Motor neuron (in vitro differentiated cells): ENCODE measurements at regions of chr20 and their contacts with region 1.

Region 1: DNA sequence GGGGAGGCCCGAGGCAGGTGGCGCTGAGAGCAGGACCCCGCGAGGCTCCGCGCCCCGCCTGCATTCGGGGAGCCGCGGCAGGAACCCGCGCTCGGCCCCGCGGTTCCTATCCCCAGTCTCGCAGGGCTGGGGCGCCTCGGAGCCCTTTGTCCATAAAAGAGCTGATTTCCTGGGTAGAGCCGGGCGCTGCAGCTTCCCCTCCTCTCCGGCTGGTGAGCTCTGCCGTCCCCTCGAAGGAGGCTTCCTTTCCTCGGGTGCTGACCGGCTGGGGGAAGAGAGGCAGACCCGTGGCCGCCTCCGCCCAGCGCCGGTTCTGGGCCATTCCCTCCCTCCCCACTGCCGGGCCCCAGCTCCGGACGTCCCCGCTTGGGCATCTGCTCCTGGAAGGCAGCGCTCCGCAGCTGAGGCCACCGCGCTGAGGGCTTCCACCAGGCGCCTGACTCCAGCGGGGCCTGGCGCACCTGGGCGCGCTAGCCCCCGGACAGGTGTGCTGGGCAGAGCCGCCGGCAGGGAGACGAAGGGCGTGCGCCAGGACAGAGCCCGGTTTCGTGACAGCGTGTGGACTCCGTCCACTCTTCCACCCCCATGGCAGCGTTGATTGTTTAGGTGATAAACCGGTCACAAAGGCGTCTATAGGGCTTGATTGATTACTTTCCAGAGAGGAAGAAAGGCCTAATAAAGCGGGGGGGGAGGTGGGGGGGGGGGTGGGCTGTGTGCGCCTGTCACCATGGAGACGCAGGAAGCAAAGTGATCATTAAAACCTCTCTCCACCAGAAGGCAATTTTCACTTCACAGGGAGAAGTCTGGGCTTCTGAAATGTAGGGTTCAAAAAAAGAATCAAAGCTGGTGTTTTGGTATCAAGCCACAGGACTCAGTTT is 1.1 kb downstream of the PHACTR3 start:
- ATAC-seq: peak in 5 of 8 experiments; percentile 64 to 69 (median 67)
- H3K4me3 ChIP-seq: peak overlapping the region; percentile 54 to 75 (median 64)
- H3K27ac ChIP-seq: peak overlapping the region; percentile 93 to 96
- H3K4me1 ChIP-seq: peaks cover 32 to 37% of the 10 kb centered on the region in 2 donors

Region 2: DNA sequence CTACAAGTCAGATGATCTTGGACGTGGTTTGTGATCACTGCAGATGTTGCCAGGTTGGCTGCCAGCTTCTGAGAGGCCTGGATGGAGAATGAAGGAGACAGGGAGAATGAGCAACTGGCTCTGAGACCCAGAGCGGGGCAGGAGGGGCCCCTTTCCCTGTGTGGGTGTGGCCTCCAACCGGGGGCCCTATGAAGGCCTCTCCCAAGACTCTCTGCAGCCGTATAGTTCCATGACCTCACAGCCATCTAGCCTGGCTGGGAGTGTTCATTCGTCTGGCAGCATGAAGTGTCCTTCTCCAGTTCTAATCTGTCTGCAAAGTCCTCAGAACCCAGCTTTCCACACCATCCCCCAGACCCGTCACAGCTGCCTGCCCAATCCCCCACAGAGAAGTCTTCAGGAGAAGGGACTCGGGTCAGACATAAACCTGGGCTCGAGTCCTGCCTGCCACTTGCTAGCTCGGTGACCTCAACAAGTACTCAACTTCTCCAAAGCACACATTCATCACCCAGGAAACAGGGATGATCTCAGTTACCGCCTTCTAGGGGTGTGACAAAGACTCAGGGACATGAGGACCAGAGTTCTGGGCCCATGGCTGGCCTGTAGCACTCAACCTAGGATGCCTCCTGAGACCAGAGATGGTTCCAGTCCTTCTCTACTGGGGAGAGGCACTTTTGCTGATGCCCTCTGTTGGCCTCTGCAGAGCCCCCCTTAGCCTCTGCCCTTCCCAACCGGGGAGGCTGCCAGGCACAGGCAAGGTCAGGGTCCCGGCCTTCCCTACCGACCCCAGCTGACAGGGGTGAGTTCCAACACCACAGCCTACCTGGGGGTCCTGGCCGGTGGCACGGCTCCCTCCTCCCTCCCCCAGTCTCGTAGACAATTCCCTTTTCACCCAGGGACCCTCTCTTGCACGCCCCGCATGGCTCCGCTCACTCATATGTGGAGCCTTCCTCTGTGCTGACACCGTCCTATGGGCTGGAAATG is 182.2 kb before region 1 on chr20:
- in situ Hi-C with region 1: no loop called
- ATAC-seq: peak in 6 of 8 experiments; percentile 23 to 78 (median 29)
- H3K4me3 ChIP-seq: no peak overlapping the region
- H3K27ac ChIP-seq: no peak overlapping the region
- H3K4me1 ChIP-seq: peaks cover 7% of the 10 kb centered on the region in 2 donors

Region 3: GRCh38 chr20:59723607-59724456 is 118.4 kb after region 1 on chr20:
- in situ Hi-C with region 1: loop called in 4 of 9 experiments (anchors 25 kb)
- ATAC-seq: peak in 4 of 8 experiments; percentile 38 to 73 (median 58)
- H3K4me3 ChIP-seq: no peak overlapping the region
- H3K27ac ChIP-seq: no peak overlapping the region
- H3K4me1 ChIP-seq: peaks cover 20 to 29% of the 10 kb centered on the region in 2 donors

Region 4: DNA sequence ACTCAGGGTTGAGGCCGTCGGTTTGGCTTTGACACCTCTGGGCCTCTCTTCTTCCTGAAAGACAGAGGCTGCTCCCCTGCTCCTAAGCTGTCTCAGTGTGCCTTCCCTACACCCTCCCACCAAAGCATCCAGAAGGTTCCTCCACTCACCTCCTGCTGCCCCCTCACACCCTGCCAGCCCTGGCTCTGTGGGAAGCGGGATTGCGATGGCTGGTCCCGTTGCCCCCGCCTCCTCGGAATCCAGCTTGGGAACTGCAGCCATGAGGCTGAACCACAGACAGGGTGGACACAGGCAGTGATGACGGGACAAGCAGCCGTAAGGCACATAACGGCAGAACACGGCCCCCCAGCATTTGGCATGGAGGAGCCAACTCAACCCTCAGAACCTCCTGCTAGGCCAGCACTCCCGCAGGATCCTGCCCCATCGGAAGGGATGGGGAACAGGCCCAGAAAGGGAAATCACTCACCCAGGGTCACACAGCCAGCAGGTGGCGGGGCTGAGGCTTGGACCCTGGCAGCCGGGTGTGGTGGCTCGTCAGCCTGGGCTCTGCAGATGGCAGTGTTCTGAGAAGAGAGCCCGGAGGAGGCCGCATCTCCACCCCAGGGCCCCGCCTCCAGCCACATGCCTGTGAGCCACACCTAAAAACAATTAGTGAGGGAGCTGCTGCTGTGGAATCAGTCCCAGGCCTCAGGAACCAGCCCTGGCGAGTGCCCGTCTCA is 138.5 kb after region 1 on chr20:
- in situ Hi-C with region 1: loop called in 3 of 9 experiments (anchors 25 kb)
- ATAC-seq: peak; percentile 25 to 97 (median 79)
- H3K4me3 ChIP-seq: no peak overlapping the region
- H3K27ac ChIP-seq: no peak overlapping the region
- H3K4me1 ChIP-seq: peaks cover 4% of the 10 kb centered on the region in 2 donors